Activated CD4-positive, alpha-beta T cell treated with anti-CD3 and anti-CD28 coated beads for 36 hours (primary cell): ENCODE measurements at regions of chr13 and their contacts with region 1.

Region 1: DNA sequence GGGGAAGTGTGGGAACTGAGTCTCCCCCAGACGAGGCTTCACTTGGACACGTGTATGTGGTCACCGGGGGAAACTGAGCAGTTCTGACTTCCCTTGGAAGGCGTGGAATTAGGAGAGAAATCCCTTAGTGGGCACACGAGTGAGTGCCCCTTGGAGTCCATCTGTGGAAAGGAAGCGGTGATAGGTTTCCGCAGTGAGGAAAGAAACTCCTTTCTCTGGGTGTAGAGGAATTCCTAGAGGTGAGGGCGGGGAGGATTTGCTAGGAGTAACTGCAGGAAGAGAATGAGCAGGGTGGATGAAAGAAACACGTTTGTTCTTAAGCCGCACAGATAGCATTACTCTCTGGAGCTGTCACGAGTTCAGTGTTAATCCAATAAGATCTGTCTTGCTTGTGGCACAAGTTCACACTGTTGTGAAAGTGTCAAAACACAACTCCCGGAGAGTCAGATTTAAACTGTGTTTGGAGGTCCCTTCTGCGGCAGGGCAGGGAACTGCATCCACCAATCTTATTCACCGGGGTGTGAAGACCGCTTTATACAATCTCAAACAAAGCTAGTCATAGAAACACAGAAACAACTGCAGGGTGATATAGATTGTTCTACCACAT is 1.2 kb downstream of the KL start:
- DNase-seq: peak; percentile 74
- ATAC-seq: peak; percentile 98
- H3K4me3 Mint-ChIP-seq: peak overlapping the region; percentile 52
- H3K27ac Mint-ChIP-seq: no peak overlapping the region
- H3K4me1 Mint-ChIP-seq: peaks cover 9% of the 10 kb centered on the region
- H3K27me3 Mint-ChIP-seq: peaks cover 56% of the 10 kb centered on the region

Region 2: DNA sequence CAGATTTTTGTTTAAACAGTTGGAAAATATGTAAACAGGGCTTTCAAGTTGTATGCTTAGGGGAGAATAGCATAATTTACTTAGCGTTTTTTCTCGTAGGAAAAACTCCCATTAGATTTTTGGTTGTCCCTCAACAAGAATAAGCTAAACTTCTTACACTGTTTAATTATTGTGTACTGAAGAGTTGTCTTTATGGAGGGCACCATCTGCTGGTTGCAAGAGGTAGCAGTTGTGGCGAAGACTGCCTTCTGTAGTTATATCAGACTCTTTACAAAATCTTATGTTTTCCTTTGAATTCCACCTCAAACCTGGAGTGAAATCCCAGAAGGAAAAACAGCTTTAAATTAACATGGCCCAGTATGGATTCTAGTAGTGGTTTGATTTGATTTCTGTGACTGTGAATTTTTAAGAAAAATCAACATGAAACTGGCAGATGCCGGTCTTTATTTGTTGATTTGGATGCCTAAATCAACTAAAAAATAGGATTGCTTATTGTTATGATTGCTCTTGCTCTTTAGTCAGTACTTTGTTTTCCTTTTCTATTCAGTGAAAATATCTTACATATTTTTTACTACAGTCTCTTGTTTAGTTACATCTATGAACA is 377.8 kb before region 1 on chr13:
- CTCF ChIA-PET with region 1: no interaction called
- POLR2A ChIA-PET with region 1: no interaction called
- intact Hi-C with region 1: loop called in 1 of 2 experiments (anchors 5 kb)
- DNase-seq: peak; percentile 66
- ATAC-seq: peak; percentile 69
- H3K4me3 Mint-ChIP-seq: no peak overlapping the region
- H3K27ac Mint-ChIP-seq: no peak overlapping the region
- H3K4me1 Mint-ChIP-seq: peaks cover 40% of the 10 kb centered on the region
- H3K27me3 Mint-ChIP-seq: no peaks in the 10 kb centered on the region

Region 3: GRCh38 chr13:32737111-32737571 is 280.3 kb before region 1 on chr13:
- CTCF ChIA-PET with region 1: no interaction called
- POLR2A ChIA-PET with region 1: no interaction called
- intact Hi-C with region 1: loop called in 1 of 2 experiments (anchors 5 kb)
- DNase-seq: no peak
- ATAC-seq: peak; percentile 73
- H3K4me3 Mint-ChIP-seq: peak overlapping the region; percentile 69
- H3K27ac Mint-ChIP-seq: peak overlapping the region; percentile 92
- H3K4me1 Mint-ChIP-seq: peaks cover 27% of the 10 kb centered on the region
- H3K27me3 Mint-ChIP-seq: no peaks in the 10 kb centered on the region

Region 4: DNA sequence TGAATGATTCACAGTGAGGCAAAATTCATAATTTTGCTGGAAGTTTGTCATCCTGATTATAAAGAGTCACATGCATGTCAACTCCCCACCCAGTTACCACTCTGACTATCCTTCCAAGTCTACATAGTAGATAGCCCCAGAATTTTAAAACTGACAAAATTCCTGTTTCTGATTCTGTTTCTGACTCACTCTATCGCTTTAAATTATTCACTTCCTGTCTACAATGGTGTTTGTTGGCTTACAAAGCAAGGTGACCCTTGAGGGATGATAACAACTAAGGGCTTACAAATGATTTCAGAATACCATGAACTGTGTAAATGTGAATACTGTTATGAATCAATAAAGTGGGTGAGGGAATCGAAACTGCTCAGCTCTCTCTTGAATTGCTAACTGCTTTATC is 99.9 kb before region 1 on chr13:
- CTCF ChIA-PET with region 1: no interaction called
- POLR2A ChIA-PET with region 1: no interaction called
- intact Hi-C with region 1: loop called in 1 of 2 experiments (anchors 1 kb)
- DNase-seq: peak; percentile 30
- ATAC-seq: peak; percentile 97
- H3K4me3 Mint-ChIP-seq: no peak overlapping the region
- H3K27ac Mint-ChIP-seq: peak overlapping the region; percentile 67
- H3K4me1 Mint-ChIP-seq: peaks cover 18% of the 10 kb centered on the region
- H3K27me3 Mint-ChIP-seq: peaks cover 7% of the 10 kb centered on the region

Region 5: GRCh38 chr13:33678906-33679657 is 661.7 kb after region 1 on chr13:
- CTCF ChIA-PET with region 1: no interaction called
- POLR2A ChIA-PET with region 1: no interaction called
- intact Hi-C with region 1: no loop called
- DNase-seq: peak; percentile 91
- ATAC-seq: peak; percentile 90
- H3K4me3 Mint-ChIP-seq: peak overlapping the region; percentile 64
- H3K27ac Mint-ChIP-seq: peak overlapping the region; percentile 89
- H3K4me1 Mint-ChIP-seq: peaks cover 37% of the 10 kb centered on the region
- H3K27me3 Mint-ChIP-seq: no peaks in the 10 kb centered on the region

Region 6: GRCh38 chr13:33761740-33762139 is 744.3 kb after region 1 on chr13:
- CTCF ChIA-PET with region 1: no interaction called
- POLR2A ChIA-PET with region 1: no interaction called
- intact Hi-C with region 1: no loop called
- DNase-seq: no peak
- ATAC-seq: no peak
- H3K4me3 Mint-ChIP-seq: no peak overlapping the region
- H3K27ac Mint-ChIP-seq: no peak overlapping the region
- H3K4me1 Mint-ChIP-seq: no peaks in the 10 kb centered on the region
- H3K27me3 Mint-ChIP-seq: peaks cover 3% of the 10 kb centered on the region